Prostate gland (tissue), 2 donors: ENCODE measurements at regions of chr17 and their contacts with region 1.

Region 1: GRCh38 chr17:2233441-2233947 is 70.1 kb downstream of the SMG6 start:
- DNase-seq: no peak
- H3K4me3 ChIP-seq: no peak overlapping the region
- H3K27ac ChIP-seq: peak overlapping the region; percentile 19 to 39
- H3K4me1 ChIP-seq: peaks cover 5% of the 10 kb centered on the region
- H3K27me3 ChIP-seq: no peaks in the 10 kb centered on the region
- CTCF ChIP-seq: no peak
- POLR2A ChIP-seq: no peak

Region 2: DNA sequence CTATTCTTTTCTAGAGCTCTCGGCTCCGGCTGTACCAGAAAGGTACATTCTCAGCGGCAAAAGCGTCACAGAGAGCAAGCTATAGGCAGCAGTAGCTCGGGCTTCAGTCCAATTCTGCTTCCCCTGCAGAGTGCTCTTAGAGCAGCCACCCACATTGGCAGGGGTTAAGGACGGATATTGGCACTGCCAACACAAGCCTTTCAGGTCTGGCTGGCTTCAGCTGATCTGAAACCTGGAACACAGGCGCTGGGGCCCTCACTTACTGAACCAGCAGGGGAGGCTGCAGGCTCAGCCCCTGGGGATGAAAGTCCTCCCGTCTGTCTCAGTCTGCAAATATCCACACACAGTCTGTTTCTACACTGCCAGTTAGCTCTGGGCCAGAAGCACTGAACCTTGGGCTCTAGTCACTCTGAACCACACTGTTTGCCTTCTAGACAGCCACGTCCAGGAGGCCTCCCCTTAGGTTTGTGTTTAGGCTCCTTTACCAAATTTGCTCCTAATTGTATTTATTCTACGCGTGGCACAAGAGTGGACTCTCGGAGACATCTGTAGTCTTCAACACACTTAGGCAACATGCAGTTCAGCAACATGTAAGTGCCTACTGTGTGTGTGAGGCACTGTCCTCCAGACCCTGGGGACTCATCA is 138.5 kb before region 1 on chr17:
- intact Hi-C with region 1: loop called (anchors 5 kb)
- DNase-seq: peak; percentile 92
- H3K4me3 ChIP-seq: no peak overlapping the region
- H3K27ac ChIP-seq: peak overlapping the region; percentile 24 to 28
- H3K4me1 ChIP-seq: peaks cover 5% of the 10 kb centered on the region
- H3K27me3 ChIP-seq: no peaks in the 10 kb centered on the region
- CTCF ChIP-seq: peak; percentile 33 to 96 (median 86)
- POLR2A ChIP-seq: no peak